Dorsolateral prefrontal cortex (tissue), 120 donors: ENCODE measurements at regions of chrX and their contacts with region 1.

Region 1: GRCh38 chrX:87664381-87664780 is 146.8 kb downstream of the KLHL4 start:
- DNase-seq: no peak
- H3K4me3 ChIP-seq: no peak overlapping the region
- H3K27ac ChIP-seq: peak overlapping the region in 27 of 59 donors; percentile 14 to 90 (median 72)
- H3K27me3 ChIP-seq: peaks cover 0 to 54% (median 10%) of the 10 kb centered on the region in 45 donors
- CTCF ChIP-seq: peak; percentile 39 to 78 (median 63)

Region 2: DNA sequence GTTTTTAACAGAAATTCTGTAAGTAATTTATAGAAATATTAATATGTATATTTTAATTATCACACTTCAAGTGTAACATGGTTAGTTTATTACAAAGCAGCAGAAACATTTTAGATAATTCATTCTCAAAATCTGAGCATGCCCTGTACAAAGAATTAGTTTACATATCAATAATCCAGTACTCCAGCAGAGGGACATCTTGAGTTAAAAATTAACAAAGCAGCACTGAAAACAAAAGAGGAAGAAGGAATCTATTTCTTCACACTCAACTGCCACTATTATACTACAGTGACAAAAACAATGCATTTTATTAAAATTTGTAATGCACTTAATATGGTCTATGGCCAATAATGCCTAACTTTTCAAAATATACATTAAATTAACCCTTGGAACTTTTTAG is 325.9 kb before region 1 on chrX:
- intact Hi-C with region 1: loop called (anchors 2 to 5 kb)
- DNase-seq: no peak
- H3K4me3 ChIP-seq: no peak overlapping the region
- H3K27ac ChIP-seq: peak overlapping the region in 2 of 59 donors; percentile 5 to 39
- H3K27me3 ChIP-seq: peaks cover 0 to 55% (median 10%) of the 10 kb centered on the region in 45 donors
- CTCF ChIP-seq: peak in 55 of 56 donors; percentile 37 to 76 (median 59)